WTC11 (cell line): ENCODE measurements at regions of chr2 and their contacts with region 1.

Region 1: GRCh38 chr2:37656512-37657423 is 14.7 kb downstream of the CDC42EP3 start:
- DNase-seq: no peak
- ATAC-seq: peak; percentile 79
- H3K4me3 Mint-ChIP-seq: peak overlapping the region; percentile 24
- H3K27ac Mint-ChIP-seq: peak overlapping the region; percentile 85
- H3K4me1 Mint-ChIP-seq: peaks cover 90% of the 10 kb centered on the region
- H3K27me3 Mint-ChIP-seq: peaks cover 41% of the 10 kb centered on the region
- CTCF ChIP-seq: no peak

Region 2: DNA sequence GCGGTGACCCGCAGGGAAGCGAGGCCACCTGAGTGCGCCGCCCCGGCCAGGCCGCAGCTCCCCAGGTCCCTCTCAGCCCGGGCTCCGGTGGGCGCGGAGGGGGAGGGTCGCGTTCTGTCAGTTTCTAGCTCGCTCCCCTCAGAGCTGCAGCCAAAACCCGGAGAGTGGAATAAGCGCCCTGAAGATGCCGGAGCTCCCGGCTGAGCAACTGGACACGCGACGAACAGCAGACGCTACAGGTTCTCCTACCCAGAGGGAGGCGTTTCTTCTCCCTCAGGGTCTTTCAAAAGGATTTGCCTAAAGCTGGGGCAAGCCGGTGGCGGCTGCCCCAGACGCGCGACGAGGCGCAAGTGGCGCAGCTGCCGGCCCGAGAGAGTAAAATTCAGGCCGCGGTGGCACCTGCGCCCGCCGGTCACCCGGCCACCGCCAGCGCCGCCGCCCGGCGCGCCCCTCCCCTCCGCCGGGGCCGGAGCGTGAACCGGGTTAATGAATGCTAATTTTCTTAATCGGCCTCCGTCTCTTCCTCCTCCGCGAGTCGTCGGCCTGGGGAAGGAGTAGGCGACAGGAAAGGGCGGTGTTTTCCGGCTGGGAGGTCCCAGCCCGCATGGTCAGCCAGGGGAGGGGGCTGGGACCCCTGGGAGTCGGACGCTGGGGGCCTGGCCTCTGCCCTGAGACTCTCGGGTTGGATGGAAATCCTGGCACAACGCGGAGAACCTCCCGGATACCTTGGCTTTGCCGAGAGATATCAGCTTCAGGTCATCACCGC is 15.5 kb after region 1 on chr2:
- CTCF ChIA-PET with region 1: interaction called, 8 read pairs
- POLR2A ChIA-PET with region 1: interaction called, 11 read pairs
- DNase-seq: peak; percentile 92
- ATAC-seq: peak; percentile 68
- H3K4me3 Mint-ChIP-seq: peak overlapping the region; percentile 82
- H3K27ac Mint-ChIP-seq: peak overlapping the region; percentile 98
- H3K4me1 Mint-ChIP-seq: peaks cover 69% of the 10 kb centered on the region
- H3K27me3 Mint-ChIP-seq: peaks cover 7% of the 10 kb centered on the region
- CTCF ChIP-seq: no peak